ENCODE measurements at regions of chr3 and their contacts with region 1.

Region 1: GRCh38 chr3:41893977-41894376 is 67.9 kb downstream of the ULK4 start:
- DNase-seq: peak; percentile 23 to 47
- ATAC-seq: peak in 1 of 2 experiments; percentile 59; a peak in 1 of 6 replicates
- H3K4me3 ChIP-seq: no peak overlapping the region
- H3K27ac ChIP-seq: no peak overlapping the region
- H3K4me1 ChIP-seq: no peaks in the 10 kb centered on the region
- CTCF ChIP-seq: peak; percentile 70
- EP300 ChIP-seq: no peak
- POLR2A ChIP-seq: no peak
- RAD21 ChIP-seq: peak; percentile 70 to 81

Region 2: GRCh38 chr3:41740374-41740886 is 153.5 kb before region 1 on chr3:
- CTCF ChIA-PET with region 1: no interaction called
- POLR2A ChIA-PET with region 1: no interaction called
- DNase-seq: no peak
- ATAC-seq: no peak
- H3K4me3 ChIP-seq: no peak overlapping the region
- H3K27ac ChIP-seq: no peak overlapping the region
- H3K4me1 ChIP-seq: no peaks in the 10 kb centered on the region
- CTCF ChIP-seq: no peak
- EP300 ChIP-seq: no peak
- POLR2A ChIP-seq: no peak
- RAD21 ChIP-seq: no peak

Region 3: DNA sequence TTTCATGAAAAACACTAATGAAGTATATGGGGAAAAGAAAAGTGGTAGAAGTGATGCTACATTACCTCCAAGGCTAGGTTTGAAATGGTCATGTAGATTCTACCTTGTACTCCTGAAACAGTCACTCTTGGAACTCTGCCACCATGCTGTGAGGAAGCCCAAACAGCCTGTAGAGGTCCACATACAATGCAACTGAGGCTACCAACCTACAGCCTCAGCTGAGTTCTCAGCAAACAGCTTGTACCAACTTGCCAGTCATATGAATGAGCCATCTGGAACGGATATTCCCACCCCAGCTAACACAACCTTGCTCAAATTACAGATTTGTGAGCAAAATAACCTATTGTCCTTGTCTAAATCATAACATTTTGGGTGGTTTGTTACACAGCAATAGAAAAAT is 125.6 kb before region 1 on chr3:
- CTCF ChIA-PET with region 1: no interaction called
- POLR2A ChIA-PET with region 1: no interaction called
- DNase-seq: no peak
- ATAC-seq: no peak
- H3K4me3 ChIP-seq: no peak overlapping the region
- H3K27ac ChIP-seq: no peak overlapping the region
- H3K4me1 ChIP-seq: no peaks in the 10 kb centered on the region
- CTCF ChIP-seq: no peak
- EP300 ChIP-seq: no peak
- POLR2A ChIP-seq: no peak
- RAD21 ChIP-seq: no peak

Region 4: DNA sequence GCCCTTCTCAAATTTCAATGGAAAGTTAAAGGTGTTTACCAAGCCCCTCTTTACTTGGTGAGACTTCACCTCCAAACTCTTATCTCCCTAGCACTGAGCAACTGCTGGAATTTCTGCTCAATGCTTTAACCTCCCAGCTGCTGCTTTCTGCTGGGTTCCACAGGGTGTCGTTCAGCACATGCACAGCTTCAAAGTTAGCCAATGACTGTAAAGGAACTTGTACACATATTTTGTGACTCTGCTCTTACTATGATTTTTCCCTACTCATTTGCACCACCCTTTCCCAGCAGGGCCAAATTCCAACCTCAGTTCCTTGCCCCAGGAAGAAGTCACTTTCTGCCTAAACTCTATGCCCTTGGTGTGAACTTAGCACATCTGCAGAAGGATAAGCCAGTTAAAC is 21.8 kb before region 1 on chr3:
- CTCF ChIA-PET with region 1: no interaction called
- POLR2A ChIA-PET with region 1: no interaction called
- DNase-seq: no peak
- ATAC-seq: no peak
- H3K4me3 ChIP-seq: no peak overlapping the region
- H3K27ac ChIP-seq: no peak overlapping the region
- H3K4me1 ChIP-seq: no peaks in the 10 kb centered on the region
- CTCF ChIP-seq: no peak
- EP300 ChIP-seq: no peak
- POLR2A ChIP-seq: no peak
- RAD21 ChIP-seq: no peak

Region 5: GRCh38 chr3:41920406-41920965 is 26.5 kb after region 1 on chr3:
- CTCF ChIA-PET with region 1: no interaction called
- POLR2A ChIA-PET with region 1: no interaction called
- DNase-seq: no peak
- ATAC-seq: no peak
- H3K4me3 ChIP-seq: no peak overlapping the region
- H3K27ac ChIP-seq: no peak overlapping the region
- H3K4me1 ChIP-seq: no peaks in the 10 kb centered on the region
- CTCF ChIP-seq: no peak
- EP300 ChIP-seq: no peak
- POLR2A ChIP-seq: no peak
- RAD21 ChIP-seq: no peak

Region 6: GRCh38 chr3:42094128-42094527 is 200.2 kb after region 1 on chr3:
- CTCF ChIA-PET with region 1: interaction called, 37 read pairs
- POLR2A ChIA-PET with region 1: no interaction called
- DNase-seq: no peak
- ATAC-seq: no peak
- H3K4me3 ChIP-seq: no peak overlapping the region
- H3K27ac ChIP-seq: no peak overlapping the region
- H3K4me1 ChIP-seq: 0 out of 3 replicates have a peak, but pooled peaks cover 5% of the 10 kb centered on the region
- CTCF ChIP-seq: no peak
- EP300 ChIP-seq: no peak
- POLR2A ChIP-seq: no peak
- RAD21 ChIP-seq: no peak

Measured in A549 (cell line).